Left ventricle myocardium inferior (tissue), 1 donor: ENCODE measurements at regions of chr18 and their contacts with region 1.

Region 1: GRCh38 chr18:28003451-28003850 is 173.5 kb downstream of the CDH2 start:
- DNase-seq: no peak
- H3K4me3 ChIP-seq: no peak overlapping the region
- H3K27ac ChIP-seq: peak overlapping the region; percentile 68
- H3K4me1 ChIP-seq: peaks cover 39% of the 10 kb centered on the region
- H3K27me3 ChIP-seq: no peaks in the 10 kb centered on the region
- CTCF ChIP-seq: no peak

Region 2: GRCh38 chr18:28065031-28065792 is 61.8 kb after region 1 on chr18:
- intact Hi-C with region 1: loop called (anchors 10 kb)
- DNase-seq: no peak
- H3K4me3 ChIP-seq: no peak overlapping the region
- H3K27ac ChIP-seq: peak overlapping the region; percentile 4
- H3K4me1 ChIP-seq: peaks cover 52% of the 10 kb centered on the region
- H3K27me3 ChIP-seq: no peaks in the 10 kb centered on the region
- CTCF ChIP-seq: no peak

Region 3: DNA sequence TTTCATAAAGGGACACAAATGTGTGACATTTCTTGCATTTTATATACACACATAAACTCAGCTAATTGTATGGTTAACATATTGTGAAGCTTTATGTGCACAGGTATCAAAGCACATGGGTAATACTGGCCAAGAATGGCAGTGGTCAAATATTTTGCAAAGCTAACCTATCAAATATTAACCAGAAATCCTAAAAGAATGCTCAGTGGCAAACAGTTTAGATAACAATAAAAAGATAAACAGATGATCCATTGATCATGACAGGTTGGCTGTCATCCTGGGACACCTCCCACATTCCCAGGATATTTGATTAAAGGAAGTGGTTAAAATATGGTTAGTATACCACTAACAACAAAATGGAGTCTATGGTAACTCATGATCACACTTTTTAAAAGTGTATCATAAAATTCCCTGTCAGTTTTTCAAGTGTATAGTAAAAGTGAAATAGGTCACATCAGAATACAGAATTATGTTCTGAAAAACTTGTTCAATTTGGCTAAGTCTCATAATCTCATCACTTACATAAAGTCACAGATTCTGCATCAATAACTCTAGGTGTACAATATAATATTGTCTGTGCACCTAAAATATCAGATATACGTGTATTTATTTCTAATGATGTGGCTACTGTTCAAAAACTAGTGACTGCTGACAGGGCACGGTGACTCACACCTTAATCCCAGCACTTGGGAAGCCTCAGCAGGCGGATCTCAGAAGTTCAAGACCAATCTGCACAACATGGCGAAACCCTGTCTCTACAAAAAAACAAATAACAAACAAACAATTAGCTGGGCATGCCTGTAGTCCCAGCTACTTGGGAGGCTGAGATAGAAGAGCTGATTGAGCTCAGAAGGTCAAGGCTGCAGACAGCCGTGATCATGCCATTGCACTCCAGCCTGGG is 124.6 kb after region 1 on chr18:
- intact Hi-C with region 1: no loop called
- DNase-seq: no peak
- H3K4me3 ChIP-seq: no peak overlapping the region
- H3K27ac ChIP-seq: peak overlapping the region; percentile 88
- H3K4me1 ChIP-seq: peaks cover 80% of the 10 kb centered on the region
- H3K27me3 ChIP-seq: no peaks in the 10 kb centered on the region
- CTCF ChIP-seq: no peak